CD8-positive, alpha-beta T cell (primary cell): ENCODE measurements at regions of chr17 and their contacts with region 1.

Region 1: DNA sequence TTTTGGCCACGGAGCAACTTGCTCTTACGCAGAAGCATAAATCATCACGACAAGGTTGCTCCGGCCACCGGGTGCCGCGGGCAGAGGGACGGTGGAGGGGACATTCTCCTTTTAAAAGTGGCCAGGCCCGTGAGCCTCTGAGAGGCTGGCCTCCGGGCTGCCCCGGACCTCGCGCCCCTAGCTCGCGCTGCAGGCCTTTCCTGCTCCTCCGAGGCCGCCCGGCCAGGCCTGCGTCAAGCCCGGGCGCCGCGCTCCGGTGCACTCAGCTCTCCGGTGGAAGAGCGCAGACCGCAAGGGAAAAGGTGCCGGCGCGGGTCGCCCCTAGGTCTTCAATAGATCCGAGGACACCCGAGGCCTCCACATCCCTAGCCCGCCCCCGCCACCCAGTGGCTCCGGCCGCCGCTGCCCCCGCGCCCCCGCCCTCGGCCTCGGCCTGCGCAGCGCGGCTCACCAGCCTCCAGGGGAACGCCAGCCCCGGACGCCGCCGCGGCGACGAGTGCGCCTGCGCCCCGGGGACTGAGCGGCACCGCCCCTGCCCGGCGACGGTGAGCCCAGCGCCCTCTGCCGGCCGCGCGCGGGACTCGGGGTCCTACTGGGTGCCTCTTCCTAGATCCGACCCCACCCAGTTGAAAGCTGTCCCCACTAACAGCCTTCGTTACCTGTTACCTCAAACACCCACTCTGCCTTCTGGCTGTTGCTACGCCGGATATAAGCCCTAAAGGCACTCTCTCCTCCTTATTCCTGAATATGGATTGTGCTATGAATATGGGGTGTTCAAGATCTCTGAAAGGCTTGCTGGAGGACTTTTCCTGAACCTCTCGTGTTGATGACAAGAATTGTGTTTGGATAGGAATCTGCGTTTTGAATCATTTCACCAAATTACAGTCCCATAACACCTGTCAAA is at the start of gene LYRM9:
- DNase-seq: peak; percentile 84 to 97 (median 93)
- ATAC-seq: peak; percentile 99
- H3K4me3 ChIP-seq: peak within 1 kb of the TSS; percentile 64 to 85
- H3K4me3 Mint-ChIP-seq: peak within 1 kb of the TSS; percentile 84
- H3K27ac ChIP-seq: peak within 1 kb of the TSS; percentile 50 to 56
- H3K27ac Mint-ChIP-seq: peak within 1 kb of the TSS; percentile 69
- H3K4me1 ChIP-seq: peaks cover 7% of the 10 kb centered on the region
- H3K4me1 Mint-ChIP-seq: peaks cover 19% of the 10 kb centered on the region
- H3K27me3 ChIP-seq: no peaks in the 10 kb centered on the region
- H3K27me3 Mint-ChIP-seq: peaks cover 15% of the 10 kb centered on the region
- CTCF ChIP-seq: peak; percentile 90
- total RNA-seq, gene LYRM9: 12.5 to 12.8 TPM

Region 2: DNA sequence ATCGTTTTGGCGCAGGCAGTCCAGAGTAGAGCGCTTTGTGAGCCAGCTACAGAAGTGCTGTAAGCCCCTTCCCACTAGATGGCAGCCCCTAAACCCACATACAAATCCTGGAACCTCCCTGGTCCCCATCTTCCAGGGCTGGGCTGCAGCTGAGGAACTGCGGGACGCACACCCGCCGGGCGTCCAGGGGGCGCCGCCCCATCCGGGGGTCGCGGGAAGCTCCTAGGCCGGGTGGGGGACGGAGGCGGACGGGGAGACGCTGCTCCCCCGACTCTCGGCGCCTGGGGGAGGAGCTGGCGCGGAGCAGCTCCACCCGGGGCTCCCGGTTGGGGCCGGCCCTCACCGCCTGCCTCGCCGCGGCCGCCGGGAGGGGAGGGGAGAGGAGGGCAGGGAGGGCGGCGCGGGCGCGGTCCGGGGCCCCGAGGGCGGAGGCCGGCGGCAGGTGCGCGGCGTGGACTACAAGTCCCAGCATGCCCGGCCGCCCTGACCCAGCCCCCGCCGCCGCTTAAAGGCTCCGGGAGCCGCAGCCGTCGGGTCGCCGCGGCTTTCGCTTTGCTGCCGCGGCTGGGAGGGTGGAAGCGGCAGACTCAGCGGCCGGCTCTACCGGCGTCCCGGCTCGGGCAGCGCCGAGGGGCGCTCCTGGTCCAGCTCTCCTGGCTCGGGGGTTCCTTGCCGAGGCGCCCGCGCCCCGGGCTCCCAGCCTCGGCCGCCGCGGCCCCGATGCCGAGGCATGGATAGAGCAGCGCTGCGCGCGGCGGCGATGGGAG is 437.0 kb before region 1 on chr17 and contains the start of gene KSR1:
- CTCF ChIA-PET with region 1: no interaction called
- POLR2A ChIA-PET with region 1: no interaction called
- intact Hi-C with region 1: loop called in 1 of 2 experiments (anchors 5 kb)
- DNase-seq: peak; percentile 45 to 90 (median 79)
- ATAC-seq: peak; percentile 92
- H3K4me3 ChIP-seq: peak within 1 kb of the TSS; percentile 70 to 89
- H3K4me3 Mint-ChIP-seq: peak within 1 kb of the TSS; percentile 90
- H3K27ac ChIP-seq: peak within 1 kb of the TSS; percentile 54 to 56
- H3K27ac Mint-ChIP-seq: peak within 1 kb of the TSS; percentile 38
- H3K4me1 ChIP-seq: peaks cover 19% of the 10 kb centered on the region
- H3K4me1 Mint-ChIP-seq: peaks cover 27% of the 10 kb centered on the region
- H3K27me3 ChIP-seq: no peaks in the 10 kb centered on the region
- H3K27me3 Mint-ChIP-seq: no peaks in the 10 kb centered on the region
- CTCF ChIP-seq: peak; percentile 40
- total RNA-seq, gene KSR1: 23.3 to 25.6 TPM

Region 3: GRCh38 chr17:27805520-27806146 is 87.5 kb before region 1 on chr17:
- CTCF ChIA-PET with region 1: interaction called, 108 read pairs
- POLR2A ChIA-PET with region 1: interaction called, 60 read pairs
- intact Hi-C with region 1: loop called (anchors 1 kb)
- DNase-seq: peak; percentile 62 to 91 (median 79)
- ATAC-seq: peak; percentile 69
- H3K4me3 ChIP-seq: peak overlapping the region; percentile 44 to 54
- H3K4me3 Mint-ChIP-seq: peak overlapping the region; percentile 84
- H3K27ac ChIP-seq: peak overlapping the region; percentile 24 to 56
- H3K27ac Mint-ChIP-seq: peak overlapping the region; percentile 94
- H3K4me1 ChIP-seq: peaks cover 21% of the 10 kb centered on the region
- H3K4me1 Mint-ChIP-seq: peaks cover 27% of the 10 kb centered on the region
- H3K27me3 ChIP-seq: no peaks in the 10 kb centered on the region
- H3K27me3 Mint-ChIP-seq: no peaks in the 10 kb centered on the region
- CTCF ChIP-seq: peak; percentile 69

Region 4: GRCh38 chr17:27907976-27908558 is 14.9 kb after region 1 on chr17:
- CTCF ChIA-PET with region 1: interaction called, 13 read pairs
- POLR2A ChIA-PET with region 1: no interaction called
- intact Hi-C with region 1: no loop called
- DNase-seq: no peak
- ATAC-seq: no peak
- H3K4me3 ChIP-seq: no peak overlapping the region
- H3K4me3 Mint-ChIP-seq: no peak overlapping the region
- H3K27ac ChIP-seq: no peak overlapping the region
- H3K27ac Mint-ChIP-seq: no peak overlapping the region
- H3K4me1 ChIP-seq: no peaks in the 10 kb centered on the region
- H3K4me1 Mint-ChIP-seq: no peaks in the 10 kb centered on the region
- H3K27me3 ChIP-seq: peaks cover 0 to 3% of the 10 kb centered on the region in 2 experiments
- H3K27me3 Mint-ChIP-seq: peaks cover 22% of the 10 kb centered on the region
- CTCF ChIP-seq: no peak

Region 5: GRCh38 chr17:28047806-28048205 is 154.7 kb after region 1 on chr17:
- CTCF ChIA-PET with region 1: no interaction called
- POLR2A ChIA-PET with region 1: no interaction called
- intact Hi-C with region 1: no loop called
- DNase-seq: no peak
- ATAC-seq: peak; percentile 46
- H3K4me3 ChIP-seq: no peak overlapping the region
- H3K4me3 Mint-ChIP-seq: peak overlapping the region; percentile 8
- H3K27ac ChIP-seq: no peak overlapping the region
- H3K27ac Mint-ChIP-seq: peak overlapping the region; percentile 12
- H3K4me1 ChIP-seq: peaks cover 28% of the 10 kb centered on the region
- H3K4me1 Mint-ChIP-seq: peaks cover 75% of the 10 kb centered on the region
- H3K27me3 ChIP-seq: no peaks in the 10 kb centered on the region
- H3K27me3 Mint-ChIP-seq: no peaks in the 10 kb centered on the region
- CTCF ChIP-seq: no peak

Region 6: GRCh38 chr17:28252436-28252835 is 359.3 kb after region 1 on chr17:
- CTCF ChIA-PET with region 1: interaction called, 5 read pairs
- POLR2A ChIA-PET with region 1: no interaction called
- intact Hi-C with region 1: loop called in 1 of 2 experiments (anchors 1 kb)
- DNase-seq: no peak
- ATAC-seq: no peak
- H3K4me3 ChIP-seq: no peak overlapping the region
- H3K4me3 Mint-ChIP-seq: no peak overlapping the region
- H3K27ac ChIP-seq: no peak overlapping the region
- H3K27ac Mint-ChIP-seq: no peak overlapping the region
- H3K4me1 ChIP-seq: peaks cover 4% of the 10 kb centered on the region
- H3K4me1 Mint-ChIP-seq: peaks cover 7% of the 10 kb centered on the region
- H3K27me3 ChIP-seq: peaks cover 0 to 5% of the 10 kb centered on the region in 2 experiments
- H3K27me3 Mint-ChIP-seq: peaks cover 33% of the 10 kb centered on the region
- CTCF ChIP-seq: no peak

Region 7: DNA sequence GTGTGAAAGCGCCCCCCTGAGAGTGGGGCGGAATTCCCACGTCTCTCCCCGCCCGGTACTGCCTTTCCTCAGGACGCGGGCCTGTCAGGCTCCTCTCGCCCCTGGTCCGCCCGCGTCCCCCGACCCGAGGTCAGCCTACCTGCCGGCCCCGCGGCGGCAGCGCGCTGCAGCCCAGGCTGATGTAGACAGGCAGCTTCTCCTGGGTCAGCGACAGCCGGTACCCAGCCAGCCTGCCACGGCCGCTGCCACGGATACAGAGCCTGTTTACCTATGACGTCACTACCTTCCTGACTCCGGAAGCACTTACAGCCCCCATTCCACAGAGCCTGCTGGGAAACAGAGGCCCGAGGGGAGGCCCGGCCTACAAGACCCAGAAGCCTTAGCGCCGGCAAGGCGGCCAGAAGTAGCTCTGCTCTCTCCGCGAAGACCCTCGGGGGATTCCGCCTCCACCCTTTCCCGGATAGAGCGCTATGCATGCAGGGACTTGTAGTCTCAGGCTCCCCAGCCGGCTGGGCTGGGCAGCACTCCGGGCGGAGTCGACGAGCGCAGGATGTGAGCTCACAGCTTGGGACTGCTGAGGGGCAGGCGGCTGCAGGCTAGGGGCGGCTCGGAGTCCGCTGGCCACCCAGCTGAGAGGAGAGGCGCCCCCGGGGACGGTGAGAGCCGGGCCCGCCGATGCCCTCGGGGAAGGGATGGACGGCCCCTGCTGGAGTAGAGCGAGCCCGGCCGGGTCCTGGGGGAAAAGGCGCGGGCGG is 442.3 kb after region 1 on chr17 and contains the starts of genes IFT20 and TNFAIP1:
- CTCF ChIA-PET with region 1: no interaction called
- POLR2A ChIA-PET with region 1: no interaction called
- intact Hi-C with region 1: loop called in 1 of 2 experiments (anchors 5 kb)
- DNase-seq: peak; percentile 94 to 100 (median 97)
- ATAC-seq: peak; percentile 96
- H3K4me3 ChIP-seq: peak within 1 kb of the TSS; percentile 80 to 95
- H3K4me3 Mint-ChIP-seq: peak within 1 kb of the TSS; percentile 99
- H3K27ac ChIP-seq: peak within 1 kb of the TSS; percentile 92 to 97
- H3K27ac Mint-ChIP-seq: peak within 1 kb of the TSS; percentile 97
- H3K4me1 ChIP-seq: peaks cover 22% of the 10 kb centered on the region
- H3K4me1 Mint-ChIP-seq: peaks cover 41% of the 10 kb centered on the region
- H3K27me3 ChIP-seq: no peaks in the 10 kb centered on the region
- H3K27me3 Mint-ChIP-seq: no peaks in the 10 kb centered on the region
- CTCF ChIP-seq: no peak
- total RNA-seq, gene IFT20: 32.5 to 34.6 TPM
- total RNA-seq, gene TNFAIP1: 15.3 to 15.5 TPM